GM12878 (cell line): ENCODE measurements at regions of chr13 and their contacts with region 1.

Region 1: DNA sequence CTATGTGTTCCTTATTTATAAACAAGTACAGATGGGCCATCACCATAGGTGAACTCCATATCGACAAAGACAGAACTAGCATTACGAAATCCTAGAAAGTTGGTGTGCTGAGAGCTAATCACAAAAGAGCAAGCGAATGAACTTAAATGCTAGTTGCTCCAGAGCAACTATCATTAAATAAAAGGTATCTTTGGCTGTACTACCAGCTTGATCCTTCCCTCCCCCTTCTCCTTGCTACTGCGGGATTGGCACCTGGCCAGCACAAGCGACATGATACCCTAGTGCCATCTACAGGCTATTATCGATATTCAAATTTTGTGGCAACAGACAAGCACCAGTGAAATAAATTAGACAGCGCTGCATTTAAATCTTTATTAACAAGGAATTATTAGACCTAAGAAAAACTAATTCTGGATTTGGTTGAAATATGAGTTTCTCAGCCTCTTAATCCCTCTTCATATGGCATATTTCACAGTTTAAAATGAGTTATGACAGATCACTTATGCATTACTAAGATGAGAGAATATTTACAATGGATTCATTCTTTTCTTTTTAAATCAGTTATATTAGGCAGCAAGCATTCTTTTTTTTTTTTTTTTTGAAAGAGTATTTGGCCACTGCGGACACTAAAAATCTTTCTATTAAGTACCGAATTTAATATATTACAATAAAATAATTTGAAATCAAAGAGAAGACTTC is 5.8 kb downstream of the PCDH9 start:
- DNase-seq: no peak
- ATAC-seq: peak; percentile 52
- H3K4me3 ChIP-seq: no peak overlapping the region
- H3K27ac ChIP-seq: no peak overlapping the region
- H3K4me1 ChIP-seq: no peaks in the 10 kb centered on the region
- H3K27me3 ChIP-seq: no peaks in the 10 kb centered on the region; a peak in 1 of 4 replicates
- CTCF ChIP-seq: peak in 2 of 3 experiments; percentile 25 to 43; a peak in 3 of 6 replicates
- EP300 ChIP-seq: no peak
- POLR2A ChIP-seq: no peak
- RAD21 ChIP-seq: peak; percentile 59

Region 2: GRCh38 chr13:65656740-65657329 is 1567.5 kb before region 1 on chr13:
- CTCF ChIA-PET with region 1: interaction called, 3 read pairs
- POLR2A ChIA-PET with region 1: no interaction called
- RAD21 ChIA-PET with region 1: no interaction called
- SMC1A ChIA-PET with region 1: no interaction called
- in situ Hi-C with region 1: no loop called
- intact Hi-C with region 1: loop called (anchors 5 kb)
- DNase-seq: no peak
- ATAC-seq: peak; percentile 52; the same call in 1 of the 3 replicates
- H3K4me3 ChIP-seq: no peak overlapping the region
- H3K27ac ChIP-seq: no peak overlapping the region
- H3K4me1 ChIP-seq: no peaks in the 10 kb centered on the region
- H3K27me3 ChIP-seq: no peaks in the 10 kb centered on the region
- CTCF ChIP-seq: peak in 1 of 3 experiments; percentile 27; a peak in 3 of 6 replicates
- EP300 ChIP-seq: no peak
- POLR2A ChIP-seq: no peak
- RAD21 ChIP-seq: 0 out of 2 replicates have a peak, but pooled peaks have one; percentile 8

Region 3: GRCh38 chr13:66618702-66619101 is 605.6 kb before region 1 on chr13:
- CTCF ChIA-PET with region 1: interaction called, 26 read pairs
- POLR2A ChIA-PET with region 1: no interaction called
- RAD21 ChIA-PET with region 1: interaction called, 4 read pairs
- SMC1A ChIA-PET with region 1: interaction called, 8 read pairs
- in situ Hi-C with region 1: no loop called
- intact Hi-C with region 1: no loop called
- DNase-seq: no peak
- ATAC-seq: no peak
- H3K4me3 ChIP-seq: no peak overlapping the region
- H3K27ac ChIP-seq: no peak overlapping the region
- H3K4me1 ChIP-seq: no peaks in the 10 kb centered on the region
- H3K27me3 ChIP-seq: no peaks in the 10 kb centered on the region
- CTCF ChIP-seq: peak in 2 of 3 experiments; percentile 15 to 36; a peak in 2 of 6 replicates
- EP300 ChIP-seq: no peak
- POLR2A ChIP-seq: no peak
- RAD21 ChIP-seq: no peak